Activated CD4-positive, alpha-beta memory T cell treated with anti-CD3 and anti-CD28 coated beads for 36 hours (primary cell): ENCODE measurements at regions of chr10 and their contacts with region 1.

Region 1: DNA sequence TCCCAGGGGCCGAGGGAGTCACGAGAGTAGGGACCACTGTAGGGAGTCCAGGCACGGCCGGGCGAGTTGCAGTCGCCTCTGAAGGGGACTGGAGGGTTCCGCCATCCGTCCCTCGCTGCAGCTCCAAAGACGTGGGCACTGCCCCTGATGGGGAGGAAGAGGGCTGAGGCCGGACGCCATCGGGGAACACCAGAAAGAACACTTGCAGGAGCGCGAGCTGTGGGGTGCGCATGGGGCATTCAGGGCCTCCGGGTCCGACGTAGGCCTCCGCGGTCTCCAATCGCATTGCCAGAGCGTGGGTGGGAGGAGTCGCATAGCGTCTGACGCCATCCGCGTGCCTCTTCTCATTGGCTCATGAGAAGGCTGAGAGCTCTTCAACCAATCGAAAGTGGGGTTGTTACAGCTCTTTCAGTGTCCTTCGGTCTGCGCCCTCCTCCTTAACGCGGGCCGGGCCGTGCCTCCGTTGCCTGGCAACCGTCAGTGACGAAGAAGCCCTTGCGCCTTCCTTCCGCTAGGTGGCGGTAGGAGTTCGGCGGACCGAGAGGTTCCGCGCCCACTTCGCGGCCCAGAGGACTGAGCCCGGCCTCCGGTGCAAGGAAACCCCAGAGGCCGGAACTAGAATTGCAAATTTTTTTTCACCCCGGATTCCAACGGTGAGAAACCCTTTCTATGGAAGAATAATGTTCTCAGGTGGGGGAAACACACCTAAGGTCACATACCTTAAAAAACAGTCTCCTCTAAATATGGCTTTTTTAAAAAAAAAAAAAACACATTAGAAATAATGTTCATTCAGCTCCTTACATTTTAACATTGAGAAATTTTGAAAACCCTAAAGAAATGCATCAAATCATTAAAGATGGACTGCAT is at the start of gene TCTN3:
- DNase-seq: peak; percentile 97
- H3K4me3 Mint-ChIP-seq: peak within 1 kb of the TSS; percentile 96
- H3K27ac Mint-ChIP-seq: peak within 1 kb of the TSS; percentile 71
- H3K4me1 Mint-ChIP-seq: peaks cover 35% of the 10 kb centered on the region
- H3K27me3 Mint-ChIP-seq: no peaks in the 10 kb centered on the region
- total RNA-seq, gene TCTN3: 22.9 to 26.3 TPM

Region 2: DNA sequence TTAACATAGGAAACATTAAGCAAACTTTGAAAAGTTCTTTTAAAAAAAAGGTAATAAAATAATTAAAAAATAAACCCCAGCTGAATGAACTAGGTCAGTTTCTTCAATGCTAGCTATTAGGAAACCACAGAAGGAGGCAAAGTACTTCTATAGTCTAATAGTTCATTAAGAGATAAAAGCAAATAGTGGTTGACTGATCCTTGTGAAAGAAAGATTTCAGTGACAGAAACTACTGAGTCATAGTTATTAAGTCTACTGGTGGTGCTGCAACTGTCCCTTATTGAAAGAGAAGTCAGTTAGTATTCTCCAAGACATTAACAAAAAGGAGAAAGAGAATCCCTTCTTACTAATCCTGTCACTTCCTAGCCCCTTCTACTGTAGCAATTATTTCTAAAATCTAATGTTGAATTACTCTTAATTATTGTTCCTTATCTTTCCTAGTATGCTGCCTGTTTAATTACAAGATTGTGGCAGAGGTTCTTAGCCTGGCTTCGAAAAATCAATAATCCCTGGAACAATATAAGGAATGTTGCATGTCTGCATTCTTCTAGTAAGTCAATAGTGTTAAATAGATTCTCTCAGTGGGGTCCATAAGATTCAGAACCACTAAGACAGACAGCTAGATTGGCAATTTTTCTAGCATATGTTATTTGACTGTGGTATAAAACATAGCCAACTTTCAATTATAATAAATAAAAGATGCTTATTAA is 18.3 kb before region 1 on chr10:
- CTCF ChIA-PET with region 1: interaction called, 18 read pairs
- POLR2A ChIA-PET with region 1: interaction called, 3 read pairs
- intact Hi-C with region 1: no loop called
- DNase-seq: no peak
- H3K4me3 Mint-ChIP-seq: no peak overlapping the region
- H3K27ac Mint-ChIP-seq: no peak overlapping the region
- H3K4me1 Mint-ChIP-seq: no peaks in the 10 kb centered on the region
- H3K27me3 Mint-ChIP-seq: no peaks in the 10 kb centered on the region

Region 3: GRCh38 chr10:95716466-95717224 is 22.7 kb after region 1 on chr10:
- CTCF ChIA-PET with region 1: interaction called, 10 read pairs
- POLR2A ChIA-PET with region 1: no interaction called
- intact Hi-C with region 1: no loop called
- DNase-seq: no peak
- H3K4me3 Mint-ChIP-seq: no peak overlapping the region
- H3K27ac Mint-ChIP-seq: no peak overlapping the region
- H3K4me1 Mint-ChIP-seq: no peaks in the 10 kb centered on the region
- H3K27me3 Mint-ChIP-seq: no peaks in the 10 kb centered on the region

Region 4: GRCh38 chr10:95841661-95842498 is 148.0 kb after region 1 on chr10:
- CTCF ChIA-PET with region 1: interaction called, 298 read pairs
- POLR2A ChIA-PET with region 1: interaction called, 6 read pairs
- intact Hi-C with region 1: loop called (anchors 1 kb)
- DNase-seq: peak; percentile 27
- H3K4me3 Mint-ChIP-seq: no peak overlapping the region
- H3K27ac Mint-ChIP-seq: peak overlapping the region; percentile 30
- H3K4me1 Mint-ChIP-seq: peaks cover 11% of the 10 kb centered on the region
- H3K27me3 Mint-ChIP-seq: no peaks in the 10 kb centered on the region

Region 5: GRCh38 chr10:95872158-95872711 is 178.3 kb after region 1 on chr10:
- CTCF ChIA-PET with region 1: interaction called, 99 read pairs
- POLR2A ChIA-PET with region 1: no interaction called
- intact Hi-C with region 1: no loop called
- DNase-seq: no peak
- H3K4me3 Mint-ChIP-seq: no peak overlapping the region
- H3K27ac Mint-ChIP-seq: no peak overlapping the region
- H3K4me1 Mint-ChIP-seq: no peaks in the 10 kb centered on the region
- H3K27me3 Mint-ChIP-seq: no peaks in the 10 kb centered on the region

Region 6: DNA sequence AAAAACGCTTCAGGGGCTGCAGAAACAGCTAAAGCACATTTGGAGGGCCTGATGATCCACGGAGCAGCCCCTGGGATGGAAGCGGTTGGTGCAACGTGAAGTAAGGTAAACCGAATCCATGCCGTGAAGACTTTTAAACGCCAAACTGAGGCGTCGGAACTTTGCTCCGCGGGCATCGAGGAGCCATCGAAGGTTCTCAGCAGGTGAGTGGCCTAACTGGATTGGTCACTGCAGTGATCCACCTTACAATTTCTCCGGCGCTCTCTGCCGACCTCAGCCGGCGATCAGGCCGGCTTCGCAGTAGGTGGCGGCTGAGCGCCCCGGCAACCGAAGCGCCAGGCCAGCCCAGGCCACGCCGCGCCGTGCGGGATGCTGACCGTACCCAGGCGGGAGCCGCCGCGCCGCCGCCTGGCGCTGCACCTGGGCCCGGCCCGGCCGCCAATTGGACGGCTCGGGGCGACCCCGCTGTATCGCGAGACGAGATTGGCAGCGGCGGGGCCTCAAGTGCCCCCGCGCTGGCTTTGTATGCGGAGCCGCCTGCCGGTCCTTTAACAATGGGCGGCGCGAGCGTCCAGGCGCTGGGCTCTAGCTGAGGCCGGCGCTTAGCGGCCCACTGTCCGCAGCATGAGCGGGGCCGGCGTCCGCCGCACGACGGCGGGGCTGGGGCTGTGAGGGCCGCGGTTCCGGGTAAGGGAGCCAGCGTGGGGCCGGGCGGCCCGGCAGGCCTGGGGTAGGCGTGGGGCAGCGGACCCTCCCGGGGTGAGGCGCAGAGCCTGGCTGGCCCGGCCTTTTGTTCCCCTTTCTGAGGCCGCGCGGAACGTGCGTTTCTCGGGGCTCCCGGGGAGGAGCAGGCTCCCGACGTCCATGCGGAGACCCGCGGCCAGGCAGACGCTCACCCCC is 349.4 kb after region 1 on chr10 and contains the start of gene CCNJ:
- CTCF ChIA-PET with region 1: interaction called, 11 read pairs
- POLR2A ChIA-PET with region 1: no interaction called
- intact Hi-C with region 1: loop called (anchors 1 kb)
- DNase-seq: peak; percentile 88
- H3K4me3 Mint-ChIP-seq: peak within 1 kb of the TSS; percentile 90
- H3K27ac Mint-ChIP-seq: peak within 1 kb of the TSS; percentile 59
- H3K4me1 Mint-ChIP-seq: peaks cover 42% of the 10 kb centered on the region
- H3K27me3 Mint-ChIP-seq: peaks cover 5% of the 10 kb centered on the region
- total RNA-seq, gene CCNJ: 4.3 to 4.4 TPM

Region 7: DNA sequence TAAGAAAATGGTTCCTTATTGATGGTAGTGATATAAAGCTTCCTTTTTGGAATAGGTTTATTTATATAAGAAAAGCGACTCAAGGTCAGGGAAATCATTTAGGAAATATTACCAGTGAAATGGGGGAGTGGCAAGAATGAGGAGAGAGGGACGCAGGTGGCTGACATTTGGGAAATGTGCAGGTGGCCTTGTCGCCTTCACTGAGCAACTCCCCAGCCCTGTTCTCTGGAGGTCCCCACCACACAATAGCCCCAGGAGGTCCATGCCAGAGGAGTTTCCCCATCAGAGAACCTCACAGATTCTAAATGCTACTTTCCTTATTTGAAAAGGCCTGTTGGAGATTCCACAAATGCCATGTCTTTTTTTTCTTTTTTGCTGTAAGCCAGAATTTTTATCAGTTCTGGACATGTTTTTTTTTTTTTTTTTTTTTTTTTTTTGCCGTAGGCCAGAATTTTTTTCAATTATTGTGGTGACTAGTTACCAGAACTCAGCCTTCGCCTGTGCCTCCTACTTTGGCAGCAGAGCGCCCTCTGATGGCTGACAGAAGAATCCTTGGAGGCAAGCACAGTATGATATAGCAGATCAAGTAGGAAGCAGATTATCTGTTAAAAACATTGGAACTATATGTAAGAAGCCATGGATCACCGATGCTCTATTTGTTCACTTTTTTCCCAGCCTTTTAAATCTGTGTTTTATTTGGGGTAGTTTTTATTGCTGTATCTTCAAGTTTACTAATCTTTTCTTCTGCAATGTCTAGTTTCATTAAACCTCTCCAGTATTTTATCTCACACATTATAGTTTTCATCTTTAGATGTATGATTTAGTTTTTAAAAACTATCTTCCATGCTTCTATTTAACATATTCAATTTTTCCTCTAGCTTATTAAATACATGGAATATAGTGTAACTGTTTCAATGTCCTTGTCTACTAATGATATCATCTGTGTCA is 646.3 kb after region 1 on chr10:
- CTCF ChIA-PET with region 1: no interaction called
- POLR2A ChIA-PET with region 1: no interaction called
- intact Hi-C with region 1: loop called (anchors 1 kb)
- DNase-seq: peak; percentile 71
- H3K4me3 Mint-ChIP-seq: no peak overlapping the region
- H3K27ac Mint-ChIP-seq: no peak overlapping the region
- H3K4me1 Mint-ChIP-seq: peaks cover 7% of the 10 kb centered on the region
- H3K27me3 Mint-ChIP-seq: peaks cover 11% of the 10 kb centered on the region